Activated CD4-positive, alpha-beta T cell treated with anti-CD3 and anti-CD28 coated beads for 36 hours (primary cell): ENCODE measurements at regions of chr12 and their contacts with region 1.

Region 1: DNA sequence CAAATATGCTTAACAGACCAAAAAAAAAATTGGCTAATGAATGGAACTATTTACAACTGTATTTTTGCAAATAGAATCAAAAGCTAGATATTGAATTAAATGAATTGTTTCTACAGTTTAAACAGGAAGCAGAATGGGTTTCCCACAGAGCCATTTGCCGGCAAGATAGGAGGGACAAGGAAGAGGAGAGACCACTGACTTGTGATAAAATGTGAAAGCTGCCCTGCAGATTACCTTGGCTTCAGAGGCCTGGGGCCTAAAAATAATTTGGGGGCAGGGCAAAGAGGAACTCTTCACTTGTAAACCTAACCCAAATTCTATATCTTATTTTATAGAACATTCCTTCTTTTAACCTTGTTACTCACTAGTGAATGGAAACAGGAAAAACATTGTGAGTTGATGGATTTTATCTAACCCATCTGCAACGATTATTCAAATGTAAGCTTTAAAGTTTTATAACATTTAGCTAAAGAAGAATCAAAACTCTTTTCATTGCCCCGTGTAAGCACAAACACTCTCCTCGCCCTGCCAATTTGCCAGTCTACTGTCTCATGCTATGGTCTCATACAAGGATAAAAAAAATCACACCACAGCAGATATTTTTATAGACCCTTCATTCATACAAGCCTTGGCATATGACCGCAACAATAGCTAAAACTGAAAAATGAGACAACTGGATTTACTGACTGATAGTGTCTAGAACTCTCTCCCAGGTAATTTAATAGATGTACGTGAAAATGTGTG is 49.5 kb upstream of the MDM1 start:
- DNase-seq: no peak
- ATAC-seq: no peak
- H3K4me3 Mint-ChIP-seq: no peak overlapping the region
- H3K27ac Mint-ChIP-seq: no peak overlapping the region
- H3K4me1 Mint-ChIP-seq: peaks cover 10% of the 10 kb centered on the region
- H3K27me3 Mint-ChIP-seq: no peaks in the 10 kb centered on the region

Region 2: DNA sequence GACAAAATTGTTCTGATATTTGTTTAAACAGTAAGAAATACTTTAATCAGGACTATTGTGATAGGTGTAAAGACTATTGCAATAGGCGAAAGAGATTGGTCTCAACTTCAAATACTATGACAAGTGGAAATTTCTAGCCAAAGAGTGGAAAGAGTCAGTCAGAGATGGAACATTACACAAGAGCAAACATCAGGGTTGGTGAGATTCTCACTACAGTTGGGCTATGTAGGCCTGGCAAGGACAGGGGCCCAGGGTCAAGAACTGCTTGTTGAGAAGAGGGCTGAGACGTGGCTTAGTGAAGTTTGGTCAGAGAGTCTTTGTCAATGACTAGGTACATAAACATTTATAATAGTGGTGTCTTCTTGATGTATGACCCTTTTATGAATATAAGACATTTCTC is 1093.1 kb before region 1 on chr12:
- CTCF ChIA-PET with region 1: no interaction called
- POLR2A ChIA-PET with region 1: no interaction called
- intact Hi-C with region 1: no loop called
- DNase-seq: no peak
- ATAC-seq: peak; percentile 33
- H3K4me3 Mint-ChIP-seq: no peak overlapping the region
- H3K27ac Mint-ChIP-seq: peak overlapping the region; percentile 76
- H3K4me1 Mint-ChIP-seq: peaks cover 44% of the 10 kb centered on the region
- H3K27me3 Mint-ChIP-seq: no peaks in the 10 kb centered on the region

Region 3: DNA sequence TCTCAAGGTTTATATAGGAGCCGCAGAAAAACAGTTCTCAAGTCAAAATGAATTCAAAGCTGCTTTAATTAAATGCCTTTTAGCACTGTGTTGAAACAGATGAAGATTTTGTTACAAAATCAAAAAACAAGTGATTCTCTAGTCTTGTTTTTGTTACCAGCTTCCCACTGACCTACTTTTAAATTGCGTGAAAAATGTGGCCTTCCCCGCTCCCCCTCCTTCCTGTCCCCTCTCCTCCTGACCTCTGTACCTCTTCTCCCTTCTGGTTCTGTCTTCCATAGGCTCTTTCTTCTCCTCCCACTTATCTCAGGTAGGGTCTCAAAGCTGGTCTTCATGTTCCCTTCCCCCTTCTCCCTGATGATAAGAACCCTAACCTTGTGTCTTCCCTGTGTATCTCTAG is 40.5 kb after region 1 on chr12:
- CTCF ChIA-PET with region 1: interaction called, 11 read pairs
- POLR2A ChIA-PET with region 1: no interaction called
- intact Hi-C with region 1: no loop called
- DNase-seq: no peak
- ATAC-seq: no peak
- H3K4me3 Mint-ChIP-seq: no peak overlapping the region
- H3K27ac Mint-ChIP-seq: no peak overlapping the region
- H3K4me1 Mint-ChIP-seq: peaks cover 25% of the 10 kb centered on the region
- H3K27me3 Mint-ChIP-seq: no peaks in the 10 kb centered on the region